ENCODE measurements at regions of chr15 and their contacts with region 1.

Region 1: DNA sequence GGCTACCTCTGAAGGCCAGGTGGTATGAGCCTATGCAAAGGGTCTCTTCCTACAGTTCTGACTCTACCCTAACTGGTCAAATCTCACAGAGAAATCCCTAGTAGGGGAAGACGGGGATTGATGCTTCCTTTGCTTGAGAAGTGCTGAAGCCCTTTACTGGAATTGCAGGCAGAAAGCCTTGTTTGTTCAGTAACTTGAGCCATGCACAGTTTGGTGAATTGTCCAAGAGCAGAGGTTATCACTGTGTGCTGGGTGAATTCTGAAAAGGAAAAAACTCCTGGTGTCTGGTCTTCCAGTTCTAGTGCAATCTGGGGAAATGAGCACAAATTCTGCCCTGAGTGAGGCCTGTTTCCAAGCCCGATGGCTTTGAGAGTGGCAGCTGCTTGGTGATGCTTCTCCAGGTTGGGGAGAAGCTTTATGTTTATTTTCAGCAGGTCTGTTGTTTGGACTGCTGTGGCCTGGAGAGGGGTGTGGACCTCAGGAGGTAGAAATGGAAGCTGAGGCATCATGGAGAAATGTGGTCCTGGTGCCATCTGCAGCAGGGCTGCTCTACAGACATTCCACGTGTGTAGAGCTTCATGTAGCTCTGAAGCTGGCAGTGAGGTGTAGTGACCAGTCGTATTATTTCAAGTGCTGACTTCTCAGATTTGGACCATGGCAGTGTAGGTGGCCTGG is 60.9 kb downstream of the ARNT2 start:
- DNase-seq: no peak
- H3K4me3 ChIP-seq: no peak overlapping the region
- H3K27ac ChIP-seq: peak overlapping the region in 8 of 59 donors; percentile 15 to 58 (median 47)
- H3K27me3 ChIP-seq: no peaks in the 10 kb centered on the region
- CTCF ChIP-seq: no peak

Region 2: DNA sequence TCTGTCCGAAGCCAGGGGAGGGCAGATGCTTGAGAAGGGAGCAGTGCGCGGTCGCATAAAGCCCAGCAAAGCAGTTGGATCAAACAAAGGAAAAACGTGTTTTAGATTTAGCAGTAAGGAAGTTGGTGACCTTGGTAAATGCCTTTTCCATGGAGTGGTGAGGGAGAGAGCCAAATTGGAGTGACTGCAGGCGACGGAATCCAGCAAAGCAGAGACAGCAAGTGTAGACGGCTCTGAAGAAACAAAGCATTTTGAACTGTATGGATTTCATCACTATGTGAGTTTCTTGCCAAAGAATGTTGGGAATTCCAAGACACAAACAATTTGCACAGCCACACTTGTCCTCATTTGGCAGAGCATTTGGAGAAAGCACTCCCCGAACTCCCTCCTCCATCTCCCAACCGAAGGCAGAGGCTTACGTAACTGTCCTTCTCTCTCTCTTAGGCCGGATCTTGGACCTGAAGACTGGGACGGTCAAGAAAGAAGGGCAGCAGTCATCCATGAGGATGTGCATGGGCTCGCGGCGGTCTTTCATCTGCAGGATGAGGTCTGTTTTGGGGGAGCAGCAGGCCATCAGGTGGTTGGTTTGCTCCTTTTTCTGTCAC is 42.7 kb after region 1 on chr15:
- intact Hi-C with region 1: loop called in 1 of 2 experiments (anchors 5 kb)
- DNase-seq: no peak
- H3K4me3 ChIP-seq: no peak overlapping the region
- H3K27ac ChIP-seq: peak overlapping the region in 35 of 59 donors; percentile 3 to 70 (median 42)
- H3K27me3 ChIP-seq: no peaks in the 10 kb centered on the region
- CTCF ChIP-seq: no peak